ENCODE measurements at regions of chr6 and their contacts with region 1.

Region 1: GRCh38 chr6:136967876-136968752 is 46.0 kb downstream of the SLC35D3 start:
- DNase-seq: peak; percentile 78 to 80
- H3K4me3 ChIP-seq: no peak overlapping the region
- H3K4me3 Mint-ChIP-seq: no peak overlapping the region
- H3K27ac Mint-ChIP-seq: no peak overlapping the region
- H3K4me1 ChIP-seq: peaks cover 13% of the 10 kb centered on the region
- H3K4me1 Mint-ChIP-seq: peaks cover 7% of the 10 kb centered on the region
- H3K27me3 ChIP-seq: no peaks in the 10 kb centered on the region
- H3K27me3 Mint-ChIP-seq: no peaks in the 10 kb centered on the region
- CTCF ChIP-seq: peak; percentile 65 to 73

Region 2: DNA sequence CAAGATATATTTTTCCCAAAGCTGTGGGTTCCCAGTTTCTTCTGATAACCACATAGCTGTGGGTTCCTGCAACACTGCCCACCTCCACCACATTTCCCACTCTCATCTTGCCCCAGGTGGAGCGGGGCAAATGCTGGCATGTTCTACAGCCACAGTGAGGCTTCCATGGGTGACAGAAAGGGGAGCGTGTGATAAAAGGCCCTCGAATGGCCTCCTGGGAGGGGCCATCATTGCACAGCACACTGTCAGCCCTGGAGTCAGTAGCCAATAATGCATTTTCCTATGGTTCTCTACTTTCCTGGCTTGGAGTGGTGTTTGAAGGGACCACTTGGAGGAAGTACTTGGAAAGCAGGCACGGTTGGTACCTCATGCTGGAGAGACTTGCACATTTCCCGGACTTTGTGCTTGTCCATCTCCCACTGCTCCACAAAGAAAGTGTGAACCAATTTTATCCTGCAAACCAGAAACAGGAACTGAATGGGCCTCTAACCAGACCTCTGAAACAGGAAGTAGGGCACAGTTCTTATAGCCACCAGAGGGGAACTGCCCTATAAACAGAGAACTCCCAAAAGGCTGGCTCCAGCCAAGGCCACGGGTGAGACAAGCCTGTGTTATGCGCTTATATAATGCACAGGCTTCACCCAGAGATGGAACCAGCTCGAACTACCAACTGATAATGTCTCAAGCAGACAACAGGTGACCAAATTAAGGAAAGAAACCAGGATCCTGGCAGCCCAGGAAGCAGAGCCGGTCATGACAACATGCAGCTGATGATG is 184.4 kb before region 1 on chr6:
- CTCF ChIA-PET with region 1: no interaction called
- POLR2A ChIA-PET with region 1: no interaction called
- intact Hi-C with region 1: no loop called
- DNase-seq: no peak
- H3K4me3 ChIP-seq: no peak overlapping the region
- H3K4me3 Mint-ChIP-seq: no peak overlapping the region
- H3K27ac Mint-ChIP-seq: no peak overlapping the region
- H3K4me1 ChIP-seq: no peaks in the 10 kb centered on the region
- H3K4me1 Mint-ChIP-seq: no peaks in the 10 kb centered on the region
- H3K27me3 ChIP-seq: no peaks in the 10 kb centered on the region
- H3K27me3 Mint-ChIP-seq: no peaks in the 10 kb centered on the region
- CTCF ChIP-seq: no peak

Region 3: DNA sequence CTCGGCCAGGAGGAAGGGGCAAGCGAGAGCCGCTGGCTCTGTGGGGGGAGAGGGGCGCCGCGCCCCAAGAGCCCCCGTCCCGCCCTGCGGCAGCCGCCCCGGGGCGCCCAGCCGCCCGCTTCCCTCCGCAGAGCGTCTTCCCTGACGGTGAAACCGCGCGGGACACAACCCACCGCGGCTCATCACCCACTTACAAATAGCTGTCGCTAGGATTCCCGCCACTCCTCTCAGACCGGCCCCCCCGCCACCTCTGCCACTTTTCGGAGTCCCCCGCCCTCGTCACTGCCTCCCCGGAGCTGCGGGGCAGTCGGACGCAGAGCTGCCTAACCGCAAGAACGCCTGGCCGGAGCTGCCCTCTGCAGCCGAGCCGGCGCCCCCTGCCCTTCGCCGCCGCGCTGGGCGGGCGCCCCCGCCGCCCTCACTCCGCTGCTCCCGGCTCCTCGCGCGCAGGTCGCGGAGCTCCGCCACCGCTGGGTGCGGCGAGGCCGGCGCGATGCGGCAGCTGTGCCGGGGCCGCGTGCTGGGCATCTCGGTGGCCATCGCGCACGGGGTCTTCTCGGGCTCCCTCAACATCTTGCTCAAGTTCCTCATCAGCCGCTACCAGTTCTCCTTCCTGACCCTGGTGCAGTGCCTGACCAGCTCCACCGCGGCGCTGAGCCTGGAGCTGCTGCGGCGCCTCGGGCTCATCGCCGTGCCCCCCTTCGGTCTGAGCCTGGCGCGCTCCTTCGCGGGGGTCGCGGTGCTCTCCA is 46.0 kb before region 1 on chr6 and contains the start of gene SLC35D3:
- CTCF ChIA-PET with region 1: no interaction called
- POLR2A ChIA-PET with region 1: no interaction called
- intact Hi-C with region 1: loop called (anchors 5 kb)
- DNase-seq: peak in 1 of 2 experiments; percentile 53
- H3K4me3 ChIP-seq: peak within 1 kb of the TSS; percentile 61
- H3K4me3 Mint-ChIP-seq: peak within 1 kb of the TSS; percentile 84
- H3K27ac Mint-ChIP-seq: no peak within 1 kb of the TSS
- H3K4me1 ChIP-seq: no peaks in the 10 kb centered on the region
- H3K4me1 Mint-ChIP-seq: no peaks in the 10 kb centered on the region
- H3K27me3 ChIP-seq: no peaks in the 10 kb centered on the region; the same call in 1 of the 2 replicates
- H3K27me3 Mint-ChIP-seq: no peaks in the 10 kb centered on the region
- CTCF ChIP-seq: no peak
- total RNA-seq, gene SLC35D3: 1.4 and 2.3 TPM in 2 replicates

Region 4: DNA sequence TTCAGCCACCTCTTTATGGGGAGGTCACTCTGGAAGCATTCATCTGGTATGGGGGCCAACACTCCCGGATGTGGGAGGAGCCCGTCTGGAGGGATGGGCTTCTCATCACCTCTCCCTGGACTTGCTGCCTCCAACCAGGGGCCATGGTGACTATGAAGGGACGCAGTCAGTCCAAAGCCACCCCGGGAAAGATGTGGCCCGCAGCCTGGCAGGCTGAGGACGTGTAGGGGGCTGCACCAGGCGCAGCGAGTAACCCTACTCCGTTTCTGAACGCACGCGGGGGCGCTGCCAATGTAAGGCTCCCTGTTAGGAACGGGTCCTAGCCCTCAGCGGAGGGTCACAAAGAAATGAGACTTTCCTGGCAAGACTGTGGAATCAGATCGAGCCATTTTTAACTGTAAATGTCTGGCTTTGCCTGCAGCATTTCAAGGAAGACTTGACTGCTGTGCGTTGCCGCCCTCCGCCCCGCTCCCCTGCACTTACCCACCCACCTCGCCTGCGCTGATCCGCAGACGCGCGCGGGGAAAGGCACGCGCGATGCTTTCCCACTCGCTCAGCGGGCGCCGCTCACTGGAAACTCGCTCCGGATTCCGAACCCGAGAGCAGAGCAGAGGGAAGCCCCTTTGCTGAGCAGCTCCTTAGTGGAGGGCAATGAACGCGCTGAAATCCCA is 21.6 kb after region 1 on chr6:
- CTCF ChIA-PET with region 1: interaction called, 3 read pairs
- POLR2A ChIA-PET with region 1: no interaction called
- intact Hi-C with region 1: loop called (anchors 2 kb)
- DNase-seq: peak; percentile 42 to 53
- H3K4me3 ChIP-seq: peak overlapping the region; percentile 50
- H3K4me3 Mint-ChIP-seq: peak overlapping the region; percentile 73
- H3K27ac Mint-ChIP-seq: no peak overlapping the region
- H3K4me1 ChIP-seq: peaks cover 17% of the 10 kb centered on the region
- H3K4me1 Mint-ChIP-seq: peaks cover 9% of the 10 kb centered on the region
- H3K27me3 ChIP-seq: no peaks in the 10 kb centered on the region
- H3K27me3 Mint-ChIP-seq: no peaks in the 10 kb centered on the region
- CTCF ChIP-seq: no peak

Region 5: DNA sequence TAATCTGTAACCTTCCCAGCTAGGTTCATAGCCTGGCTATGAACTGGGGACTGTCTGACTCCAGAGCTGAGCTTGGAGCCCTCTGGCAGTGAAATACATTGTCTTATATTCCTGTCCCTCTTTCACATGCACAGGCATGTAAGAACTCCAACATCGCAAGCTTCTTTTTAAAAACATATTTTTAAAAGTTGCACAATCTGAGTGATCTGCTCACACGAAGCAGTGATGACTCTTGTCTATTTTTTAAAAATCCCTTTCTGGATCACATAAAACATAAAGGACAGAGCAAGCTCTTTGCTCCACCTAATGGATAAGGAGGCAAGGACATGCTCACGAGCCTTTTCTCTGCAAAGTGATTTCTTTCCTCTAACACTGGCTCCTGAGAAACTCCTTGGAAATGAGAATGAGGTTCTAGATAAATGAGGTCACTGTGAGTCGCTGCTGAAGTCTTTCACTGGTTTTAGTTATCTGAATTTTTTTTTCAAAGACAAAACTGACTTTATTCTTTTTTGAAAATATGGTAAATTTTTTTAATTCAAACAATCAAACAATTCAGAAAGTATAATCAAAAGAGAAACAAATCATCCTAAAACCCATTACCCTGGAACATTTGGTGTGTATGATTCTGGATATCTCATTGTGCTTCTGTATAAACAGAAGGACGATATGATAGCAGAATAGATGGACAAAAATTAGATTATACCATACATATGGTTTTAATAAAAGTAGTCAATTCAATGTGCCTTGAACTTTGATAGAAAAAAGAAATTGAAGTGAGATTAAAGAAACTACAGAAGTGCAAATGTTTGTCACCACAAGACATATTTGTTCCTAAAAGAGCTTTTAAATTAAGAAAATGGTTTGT is 45.9 kb after region 1 on chr6:
- CTCF ChIA-PET with region 1: interaction called, 5 read pairs
- POLR2A ChIA-PET with region 1: no interaction called
- intact Hi-C with region 1: loop called (anchors 1 kb)
- DNase-seq: peak in 1 of 2 experiments; percentile 43
- H3K4me3 ChIP-seq: no peak overlapping the region
- H3K4me3 Mint-ChIP-seq: no peak overlapping the region
- H3K27ac Mint-ChIP-seq: no peak overlapping the region
- H3K4me1 ChIP-seq: peaks cover 21% of the 10 kb centered on the region
- H3K4me1 Mint-ChIP-seq: peaks cover 14% of the 10 kb centered on the region
- H3K27me3 ChIP-seq: no peaks in the 10 kb centered on the region
- H3K27me3 Mint-ChIP-seq: no peaks in the 10 kb centered on the region
- CTCF ChIP-seq: peak; percentile 41 to 63

Region 6: DNA sequence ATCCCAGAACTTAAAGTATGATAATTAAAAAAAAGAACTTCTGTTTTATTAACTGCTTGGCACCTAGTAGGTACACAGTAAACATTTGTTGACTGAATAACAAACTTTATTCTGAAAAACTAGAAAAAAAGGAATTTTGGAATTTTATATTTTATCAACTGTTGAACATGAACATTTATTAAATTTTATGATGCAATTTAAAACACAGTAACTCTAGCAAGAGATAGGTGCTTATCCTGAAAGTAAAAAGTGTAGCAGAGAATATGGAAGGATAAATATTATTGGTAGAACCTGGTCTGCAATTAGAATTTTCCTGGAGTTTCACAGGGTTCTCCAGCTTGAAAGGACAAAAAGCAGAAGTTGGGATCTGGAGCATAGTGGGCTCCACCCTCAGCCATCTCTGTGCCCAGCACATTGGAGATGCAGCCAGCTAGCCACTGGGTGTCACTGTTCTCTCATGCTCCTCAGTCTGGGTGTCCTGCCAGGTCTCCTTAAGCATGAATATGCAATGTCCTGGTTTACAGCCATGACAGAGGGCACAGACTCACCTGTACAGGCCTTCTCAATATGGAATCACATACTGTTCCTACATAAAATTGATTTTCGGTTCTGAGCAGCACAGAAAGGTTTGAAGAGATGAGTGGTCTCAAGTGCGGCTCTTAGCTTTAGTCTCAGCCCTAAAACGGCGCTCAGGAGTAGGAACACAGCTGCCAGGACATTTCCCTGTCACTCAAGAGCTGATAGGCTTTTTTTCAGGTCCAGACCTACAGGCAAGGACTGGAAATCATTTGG is 108.4 kb after region 1 on chr6:
- CTCF ChIA-PET with region 1: no interaction called
- POLR2A ChIA-PET with region 1: no interaction called
- intact Hi-C with region 1: loop called (anchors 10 kb)
- DNase-seq: peak; percentile 80 to 83
- H3K4me3 ChIP-seq: no peak overlapping the region
- H3K4me3 Mint-ChIP-seq: no peak overlapping the region
- H3K27ac Mint-ChIP-seq: no peak overlapping the region
- H3K4me1 ChIP-seq: no peaks in the 10 kb centered on the region
- H3K4me1 Mint-ChIP-seq: no peaks in the 10 kb centered on the region
- H3K27me3 ChIP-seq: no peaks in the 10 kb centered on the region
- H3K27me3 Mint-ChIP-seq: peaks cover 6% of the 10 kb centered on the region
- CTCF ChIP-seq: peak; percentile 68 to 85

Region 7: DNA sequence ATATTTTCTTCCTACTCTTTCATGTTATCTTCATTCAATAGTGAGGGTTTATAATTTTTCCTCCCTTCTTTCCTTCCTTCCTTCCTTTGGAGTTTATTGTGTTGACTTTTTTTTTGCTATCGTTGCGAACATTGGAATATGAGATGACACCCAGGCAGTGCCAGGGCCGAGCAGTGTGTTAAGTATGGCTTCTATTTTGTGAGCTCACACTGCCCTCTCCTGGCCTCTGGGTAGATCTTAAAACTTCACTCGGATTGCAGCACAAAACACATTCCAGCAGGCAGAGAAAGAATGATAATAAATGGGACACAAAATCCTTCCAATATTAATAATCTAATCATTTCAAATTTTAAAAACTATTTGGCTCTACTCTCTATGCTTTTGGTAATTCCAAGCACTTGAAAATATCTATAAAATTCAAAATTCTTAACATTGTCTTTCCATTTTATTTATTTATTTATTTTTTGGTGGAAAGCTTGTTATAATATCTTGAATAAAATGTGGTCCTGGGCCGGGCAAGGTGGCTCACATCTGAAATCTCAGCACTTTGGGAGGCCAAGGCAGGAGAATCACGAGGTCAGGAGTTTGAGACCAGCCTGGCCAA is 673.5 kb after region 1 on chr6:
- CTCF ChIA-PET with region 1: no interaction called
- POLR2A ChIA-PET with region 1: no interaction called
- intact Hi-C with region 1: loop called (anchors 10 kb)
- DNase-seq: peak; percentile 67 to 69
- H3K4me3 ChIP-seq: no peak overlapping the region
- H3K4me3 Mint-ChIP-seq: no peak overlapping the region
- H3K27ac Mint-ChIP-seq: no peak overlapping the region
- H3K4me1 ChIP-seq: peaks cover 20% of the 10 kb centered on the region
- H3K4me1 Mint-ChIP-seq: peaks cover 4% of the 10 kb centered on the region
- H3K27me3 ChIP-seq: no peaks in the 10 kb centered on the region
- H3K27me3 Mint-ChIP-seq: no peaks in the 10 kb centered on the region
- CTCF ChIP-seq: peak; percentile 65 to 74

Measured in Caco-2 (cell line).